Dorsolateral prefrontal cortex (tissue), 120 donors: ENCODE measurements at regions of chr11 and their contacts with region 1.

Region 1: GRCh38 chr11:19561011-19561410 is 151.6 kb upstream of the NAV2 start:
- DNase-seq: no peak
- H3K4me3 ChIP-seq: no peak overlapping the region
- H3K27ac ChIP-seq: no peak overlapping the region
- H3K27me3 ChIP-seq: no peaks in the 10 kb centered on the region
- CTCF ChIP-seq: no peak

Region 2: DNA sequence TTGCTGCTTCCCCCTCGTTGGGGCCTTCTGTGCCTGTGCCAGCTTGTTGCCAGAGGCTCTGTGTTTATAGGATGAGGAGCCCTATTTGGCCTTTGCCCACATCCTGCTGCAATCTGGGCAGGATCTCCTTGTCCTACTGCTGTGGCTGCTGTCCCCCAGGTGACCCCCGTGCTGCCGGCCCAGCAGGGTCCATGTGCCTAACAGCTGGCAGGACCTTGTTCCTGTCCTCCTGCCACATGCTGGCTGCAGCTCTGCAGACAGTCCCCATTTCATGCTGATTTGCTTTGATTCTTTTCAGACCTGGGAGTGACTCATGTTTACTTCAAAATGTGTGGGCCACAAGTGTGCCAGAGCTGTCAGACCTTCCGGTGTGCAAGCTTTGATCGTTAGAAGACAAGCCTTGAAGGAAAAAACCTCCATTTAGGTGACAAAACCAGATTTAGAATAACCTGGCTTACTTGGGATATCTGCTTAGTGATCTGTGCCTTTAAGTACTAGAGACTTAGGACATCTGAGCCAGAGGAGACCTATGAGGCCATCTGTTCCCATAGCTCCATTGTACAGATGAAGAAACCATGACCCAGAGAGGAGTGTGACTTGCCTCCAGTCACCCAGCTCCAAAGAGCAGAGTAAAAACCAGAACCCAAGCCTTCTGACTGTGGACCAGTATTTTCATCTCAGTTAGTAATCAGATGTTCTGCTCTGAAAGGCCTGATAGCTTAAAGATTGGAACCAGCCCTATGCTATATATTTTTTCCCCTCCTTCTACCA is 162.7 kb after region 1 on chr11:
- intact Hi-C with region 1: no loop called
- DNase-seq: peak in 1 of 10 donors; percentile 54
- H3K4me3 ChIP-seq: no peak overlapping the region
- H3K27ac ChIP-seq: peak overlapping the region in 55 of 59 donors; percentile 5 to 83 (median 60)
- H3K27me3 ChIP-seq: no peaks in the 10 kb centered on the region
- CTCF ChIP-seq: no peak

Region 3: GRCh38 chr11:19742588-19743292 is 181.7 kb after region 1 on chr11:
- intact Hi-C with region 1: loop called (anchors 1 to 2 kb)
- DNase-seq: peak; percentile 78 to 94 (median 87)
- H3K4me3 ChIP-seq: no peak overlapping the region
- H3K27ac ChIP-seq: peak overlapping the region in 17 of 59 donors; percentile 16 to 70 (median 30)
- H3K27me3 ChIP-seq: no peaks in the 10 kb centered on the region
- CTCF ChIP-seq: peak; percentile 89 to 99 (median 96)

Region 4: GRCh38 chr11:19808076-19808911 is 247.3 kb after region 1 on chr11:
- intact Hi-C with region 1: loop called in 1 of 2 experiments (anchors 2 kb)
- DNase-seq: no peak
- H3K4me3 ChIP-seq: no peak overlapping the region
- H3K27ac ChIP-seq: peak overlapping the region in 20 of 59 donors; percentile 6 to 68 (median 33)
- H3K27me3 ChIP-seq: no peaks in the 10 kb centered on the region
- CTCF ChIP-seq: peak in 53 of 56 donors; percentile 15 to 75 (median 44)

Region 5: DNA sequence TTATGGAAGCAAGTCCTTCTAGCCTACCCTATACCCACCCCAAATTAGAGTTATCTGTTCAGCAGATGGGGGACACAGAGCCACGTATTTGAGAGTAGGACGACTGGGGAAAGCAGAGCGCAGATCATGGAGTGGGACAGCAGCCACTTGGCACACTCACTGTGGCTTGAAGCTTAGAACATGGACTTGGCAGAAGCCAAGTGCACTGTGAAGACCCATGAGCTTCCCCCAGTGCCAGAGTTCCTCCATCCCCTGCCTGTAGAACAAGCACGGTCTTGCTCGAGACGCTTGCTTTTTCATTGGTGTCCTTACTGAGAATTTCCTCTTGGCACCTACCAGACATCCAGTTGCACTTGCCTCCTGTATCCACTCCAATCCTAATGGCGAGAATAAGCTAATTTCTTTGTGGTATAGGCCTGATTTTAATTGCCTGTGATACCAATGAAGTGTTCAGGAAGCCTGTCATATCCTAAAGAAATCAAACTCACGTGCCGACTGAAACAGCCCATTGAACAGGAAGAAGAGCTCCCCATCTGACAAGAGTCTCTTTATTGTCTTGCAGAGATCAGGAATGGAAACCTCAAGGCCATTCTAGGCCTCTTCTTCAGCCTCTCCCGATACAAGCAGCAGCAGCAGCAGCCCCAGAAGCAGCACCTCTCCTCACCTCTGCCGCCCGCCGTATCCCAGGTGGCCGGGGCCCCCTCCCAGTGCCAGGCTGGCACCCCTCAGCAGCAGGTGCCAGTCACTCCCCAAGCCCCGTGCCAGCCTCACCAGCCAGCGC is 318.5 kb after region 1 on chr11:
- intact Hi-C with region 1: loop called in 1 of 2 experiments (anchors 5 kb)
- DNase-seq: peak in 1 of 10 donors; percentile 82
- H3K4me3 ChIP-seq: no peak overlapping the region
- H3K27ac ChIP-seq: peak overlapping the region in 5 of 59 donors; percentile 7 to 79 (median 20)
- H3K27me3 ChIP-seq: no peaks in the 10 kb centered on the region
- CTCF ChIP-seq: no peak

Region 6: DNA sequence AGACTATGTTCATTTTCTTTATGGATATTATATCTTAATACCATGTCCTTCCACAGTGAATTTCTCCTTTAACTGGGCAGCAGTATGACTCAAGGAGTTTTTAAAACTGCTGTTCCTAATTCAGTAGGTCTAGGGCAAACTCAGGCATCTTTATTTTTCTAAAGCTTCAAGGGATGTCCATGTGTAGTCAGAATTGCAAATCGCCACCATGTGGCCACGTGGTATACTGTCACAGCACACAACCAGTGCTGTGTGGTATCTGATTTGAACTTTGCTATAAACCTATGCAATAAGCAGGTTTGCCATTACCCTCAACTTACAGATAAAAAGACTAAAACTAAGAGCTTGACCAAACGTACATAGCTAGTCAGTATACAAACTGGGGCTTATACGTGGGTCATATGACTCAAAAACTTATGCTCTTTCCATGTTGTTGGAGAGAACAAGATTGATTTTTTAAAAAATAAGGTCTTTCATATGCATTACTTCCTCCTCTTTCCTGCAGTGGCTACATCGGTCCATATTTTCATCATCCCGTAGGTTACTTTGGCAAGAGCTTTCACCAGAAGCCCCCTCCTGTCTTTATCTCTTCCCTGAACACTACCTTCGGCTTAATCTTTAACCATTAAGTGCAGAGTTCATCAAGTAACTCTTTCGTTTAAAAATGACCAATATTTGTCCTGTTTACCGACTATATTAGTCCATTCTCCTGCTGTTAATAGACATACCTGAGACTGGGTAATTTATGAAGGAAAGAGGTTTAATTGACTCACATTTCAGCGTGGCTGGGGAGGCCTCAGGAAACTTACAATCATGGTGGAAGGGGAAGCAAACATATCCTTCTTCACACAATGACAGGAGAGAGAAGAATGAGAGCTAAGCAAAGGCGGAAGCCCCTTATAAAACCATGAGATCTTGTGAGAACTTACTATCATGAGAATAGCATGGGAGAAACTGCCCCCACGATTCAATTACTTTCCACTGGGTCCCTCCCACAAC is 794.5 kb after region 1 on chr11:
- intact Hi-C with region 1: loop called in 1 of 2 experiments (anchors 10 kb)
- DNase-seq: peak in 7 of 10 donors; percentile 32 to 59 (median 57)
- H3K4me3 ChIP-seq: no peak overlapping the region
- H3K27ac ChIP-seq: no peak overlapping the region
- H3K27me3 ChIP-seq: no peaks in the 10 kb centered on the region
- CTCF ChIP-seq: peak in 54 of 56 donors; percentile 33 to 80 (median 66)